K562 (cell line): ENCODE measurements at regions of chr11 and their contacts with region 1.

Region 1: DNA sequence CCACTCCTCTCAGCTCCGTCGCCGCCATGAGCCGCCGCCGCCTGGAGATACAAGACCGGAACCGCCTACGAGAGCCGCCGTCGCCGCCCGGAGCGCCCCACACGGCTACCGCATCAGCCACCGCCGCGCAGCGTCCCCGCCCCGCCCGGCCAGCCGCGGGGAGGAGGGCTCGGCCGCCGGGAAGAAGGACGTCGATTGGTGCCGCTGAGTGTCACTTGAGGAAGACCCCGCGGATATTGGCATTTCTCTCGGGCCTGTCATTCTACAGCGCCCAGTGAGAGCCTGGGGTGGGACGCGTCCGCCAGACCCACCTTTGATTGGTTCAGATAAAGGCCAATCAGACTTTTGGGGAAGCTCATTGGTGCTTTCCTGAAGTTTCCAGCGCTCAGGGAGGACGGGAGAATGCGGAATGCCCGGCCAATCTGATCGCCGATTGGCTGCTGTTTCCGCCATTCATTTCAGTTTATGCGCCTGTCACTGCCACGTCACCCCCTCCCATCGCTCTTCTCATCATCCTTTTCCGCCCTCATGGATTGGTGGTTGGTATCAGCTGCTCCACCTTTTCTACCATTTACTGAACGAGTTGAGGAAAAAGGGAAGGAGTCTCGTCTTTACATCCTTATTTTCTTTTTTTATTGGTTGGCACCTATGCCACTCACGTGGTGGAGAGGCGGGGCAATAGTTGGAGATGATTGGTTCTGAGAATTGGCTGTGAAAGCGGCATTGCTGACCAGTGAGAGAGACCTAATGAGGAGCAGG is at the start of gene OSBP:
- DNase-seq: peak; percentile 98 to 100 (median 98)
- ATAC-seq: peak; percentile 94
- H3K4me3 ChIP-seq: peak within 1 kb of the TSS; percentile 78
- H3K27ac ChIP-seq: peak within 1 kb of the TSS; percentile 93
- H3K4me1 ChIP-seq: peaks cover 8 to 42% of the 10 kb centered on the region in 2 experiments
- H3K27me3 ChIP-seq: no peaks in the 10 kb centered on the region
- CTCF ChIP-seq: 0 out of 6 replicates have a peak, but pooled peaks of 1 of the 3 experiments have one; percentile 2
- EP300 ChIP-seq: no peak
- POLR2A ChIP-seq: peak; percentile 72
- RAD21 ChIP-seq: no peak
- polyA plus RNA-seq, gene OSBP: 11.7 to 11.9 TPM

Region 2: DNA sequence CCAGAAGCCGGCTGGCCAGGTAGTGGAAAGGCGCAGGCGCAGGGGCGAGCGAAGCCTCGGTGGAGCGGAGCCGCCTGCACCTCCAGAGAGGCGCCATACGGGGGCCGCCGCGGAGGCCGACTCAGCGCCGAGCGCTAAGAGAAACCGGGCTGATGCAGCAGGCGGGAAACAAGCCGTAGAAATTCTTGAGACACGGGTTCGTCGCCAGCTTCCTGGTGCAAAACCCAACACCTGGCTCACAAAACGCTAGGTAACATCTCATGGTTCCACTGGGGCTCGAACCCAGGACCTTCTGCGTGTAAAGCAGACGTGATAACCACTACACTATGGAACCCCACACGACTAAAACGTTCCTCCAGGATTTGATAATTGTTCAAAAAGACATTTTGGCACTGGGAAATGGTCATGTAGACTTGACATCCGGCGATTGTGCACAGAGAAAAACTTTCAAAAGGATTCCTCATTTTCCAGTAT is 65.4 kb before region 1 on chr11:
- CTCF ChIA-PET with region 1: no interaction called
- POLR2A ChIA-PET with region 1: interaction called, 12 read pairs
- in situ Hi-C with region 1: no loop called
- intact Hi-C with region 1: loop called (anchors 5 kb)
- DNase-seq: peak; percentile 74 to 97 (median 76)
- ATAC-seq: peak; percentile 82
- H3K4me3 ChIP-seq: peak overlapping the region; percentile 57
- H3K27ac ChIP-seq: peak overlapping the region; percentile 100
- H3K4me1 ChIP-seq: peaks cover 22 to 31% of the 10 kb centered on the region in 2 experiments; a peak in 4 of 5 replicates
- H3K27me3 ChIP-seq: no peaks in the 10 kb centered on the region
- CTCF ChIP-seq: peak; percentile 59 to 70 (median 62)
- EP300 ChIP-seq: peak; percentile 49
- POLR2A ChIP-seq: no peak
- RAD21 ChIP-seq: peak; percentile 26 to 64; a peak in 3 of 4 replicates

Region 3: GRCh38 chr11:59560702-59561469 is 54.9 kb before region 1 on chr11:
- CTCF ChIA-PET with region 1: no interaction called
- POLR2A ChIA-PET with region 1: interaction called, 6 read pairs
- in situ Hi-C with region 1: no loop called
- intact Hi-C with region 1: loop called (anchors 2 kb)
- DNase-seq: peak; percentile 88 to 94 (median 90)
- ATAC-seq: peak; percentile 56
- H3K4me3 ChIP-seq: peak overlapping the region; percentile 60
- H3K27ac ChIP-seq: peak overlapping the region; percentile 87
- H3K4me1 ChIP-seq: peaks cover 17 to 27% of the 10 kb centered on the region in 2 experiments
- H3K27me3 ChIP-seq: no peaks in the 10 kb centered on the region
- CTCF ChIP-seq: no peak
- EP300 ChIP-seq: no peak
- POLR2A ChIP-seq: peak; percentile 57; the same call in 1 of the 2 replicates
- RAD21 ChIP-seq: no peak

Region 4: DNA sequence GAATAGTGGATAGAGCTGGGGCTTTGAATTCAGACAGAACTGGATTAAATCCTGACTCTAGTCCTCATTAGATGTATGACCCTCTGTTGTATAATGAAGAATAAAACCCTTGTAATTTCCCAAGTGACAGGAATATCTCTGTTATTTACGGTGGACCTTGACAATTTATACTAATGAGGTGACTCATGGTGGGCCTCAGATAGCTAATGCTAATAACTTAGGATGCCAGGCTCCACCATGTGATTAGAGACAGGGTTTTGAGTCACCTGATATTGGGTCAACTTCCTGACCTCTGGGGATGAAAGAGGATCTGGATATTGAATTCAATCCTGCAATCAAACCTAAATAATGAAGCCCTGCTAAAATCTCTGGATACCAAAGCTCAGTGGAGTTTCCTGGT is 33.8 kb before region 1 on chr11:
- CTCF ChIA-PET with region 1: no interaction called
- POLR2A ChIA-PET with region 1: no interaction called
- in situ Hi-C with region 1: no loop called
- intact Hi-C with region 1: no loop called
- DNase-seq: no peak
- ATAC-seq: no peak
- H3K4me3 ChIP-seq: no peak overlapping the region
- H3K27ac ChIP-seq: no peak overlapping the region
- H3K4me1 ChIP-seq: no peaks in the 10 kb centered on the region
- H3K27me3 ChIP-seq: no peaks in the 10 kb centered on the region
- CTCF ChIP-seq: no peak
- EP300 ChIP-seq: no peak
- POLR2A ChIP-seq: no peak
- RAD21 ChIP-seq: no peak

Region 5: DNA sequence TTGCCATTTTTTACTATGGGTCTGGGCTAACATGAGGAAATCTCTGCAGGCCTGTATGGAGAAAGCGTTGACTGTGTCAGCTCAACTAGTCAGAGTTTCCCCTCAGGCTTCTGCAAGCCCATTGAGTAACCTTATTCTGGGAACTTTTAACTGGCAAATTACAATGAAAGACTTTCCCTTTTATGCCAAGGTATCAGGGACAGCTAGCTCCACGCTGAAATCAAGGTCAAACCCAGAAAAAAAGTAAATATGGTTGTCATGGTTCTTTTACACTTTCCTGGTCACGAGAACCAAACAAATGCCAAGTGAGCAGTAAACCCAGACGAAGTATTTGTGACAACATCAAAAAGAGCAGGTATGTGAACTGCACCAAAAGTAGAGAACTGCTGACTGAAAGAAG is 14.0 kb before region 1 on chr11:
- CTCF ChIA-PET with region 1: no interaction called
- POLR2A ChIA-PET with region 1: interaction called, 33 read pairs
- in situ Hi-C with region 1: no loop called
- intact Hi-C with region 1: no loop called
- DNase-seq: no peak
- ATAC-seq: no peak
- H3K4me3 ChIP-seq: no peak overlapping the region
- H3K27ac ChIP-seq: no peak overlapping the region
- H3K4me1 ChIP-seq: no peaks in the 10 kb centered on the region
- H3K27me3 ChIP-seq: no peaks in the 10 kb centered on the region
- CTCF ChIP-seq: no peak
- EP300 ChIP-seq: no peak
- POLR2A ChIP-seq: no peak
- RAD21 ChIP-seq: no peak

Region 6: GRCh38 chr11:59668950-59669610 is 53.3 kb after region 1 on chr11 and contains the start of gene PATL1:
- CTCF ChIA-PET with region 1: no interaction called
- POLR2A ChIA-PET with region 1: interaction called, 8 read pairs
- in situ Hi-C with region 1: no loop called
- intact Hi-C with region 1: loop called (anchors 2 kb)
- DNase-seq: peak; percentile 98 to 99 (median 98)
- ATAC-seq: peak; percentile 95
- H3K4me3 ChIP-seq: peak within 1 kb of the TSS; percentile 82
- H3K27ac ChIP-seq: peak within 1 kb of the TSS; percentile 92
- H3K4me1 ChIP-seq: peaks cover 11 to 14% of the 10 kb centered on the region in 2 experiments; a peak in 3 of 5 replicates
- H3K27me3 ChIP-seq: no peaks in the 10 kb centered on the region
- CTCF ChIP-seq: no peak
- EP300 ChIP-seq: no peak
- POLR2A ChIP-seq: peak; percentile 75
- RAD21 ChIP-seq: no peak
- polyA plus RNA-seq, gene PATL1: 3.2 to 5.0 TPM

Region 7: GRCh38 chr11:59729834-59730233 is 114.0 kb after region 1 on chr11:
- CTCF ChIA-PET with region 1: no interaction called
- POLR2A ChIA-PET with region 1: no interaction called
- in situ Hi-C with region 1: no loop called
- intact Hi-C with region 1: no loop called
- DNase-seq: no peak
- ATAC-seq: no peak
- H3K4me3 ChIP-seq: no peak overlapping the region
- H3K27ac ChIP-seq: no peak overlapping the region
- H3K4me1 ChIP-seq: no peaks in the 10 kb centered on the region; a peak in 1 of 5 replicates
- H3K27me3 ChIP-seq: no peaks in the 10 kb centered on the region
- CTCF ChIP-seq: no peak
- EP300 ChIP-seq: no peak
- POLR2A ChIP-seq: no peak
- RAD21 ChIP-seq: no peak

Region 8: DNA sequence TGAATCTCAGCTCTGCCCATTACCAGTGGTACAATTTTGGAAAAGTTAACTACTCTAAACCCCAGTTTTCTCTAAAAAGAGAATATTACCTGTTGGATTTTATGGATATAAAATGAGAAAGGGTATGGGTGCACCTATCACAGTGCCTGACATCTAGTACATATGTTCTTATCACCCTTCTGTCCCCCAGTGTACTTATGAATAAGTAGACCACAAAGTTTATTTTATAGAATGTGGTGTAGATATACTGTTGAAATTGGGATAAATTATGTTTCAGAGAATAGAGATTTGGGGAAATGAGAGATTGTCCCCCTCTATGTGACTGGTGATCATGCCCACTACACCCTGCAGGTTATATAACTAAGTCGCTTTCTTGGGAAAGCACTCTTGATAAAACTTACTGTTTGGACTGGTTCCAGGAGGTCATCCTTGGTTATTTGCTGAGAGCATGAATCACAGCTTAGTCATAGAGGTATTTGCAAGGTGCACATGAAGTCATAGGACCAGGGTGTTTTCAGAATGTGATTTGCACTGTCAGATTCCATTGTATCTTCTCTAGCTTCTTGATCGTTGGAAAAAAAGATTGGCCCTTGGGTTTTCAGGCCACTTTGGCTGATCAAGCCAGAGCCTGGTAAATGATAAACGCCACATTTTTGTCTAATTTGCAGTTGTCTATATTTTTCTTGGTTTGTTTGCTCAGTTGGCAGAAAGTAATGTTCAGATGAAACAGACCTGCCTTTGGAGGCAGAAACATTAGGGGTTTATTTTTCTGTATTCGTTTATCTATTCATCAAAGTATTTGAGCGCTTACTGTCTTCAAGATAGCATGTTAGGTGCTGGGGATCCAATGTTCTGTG is 160.6 kb after region 1 on chr11:
- CTCF ChIA-PET with region 1: no interaction called
- POLR2A ChIA-PET with region 1: no interaction called
- in situ Hi-C with region 1: no loop called
- intact Hi-C with region 1: no loop called
- DNase-seq: peak in 2 of 4 experiments; percentile 30 to 60
- ATAC-seq: no peak
- H3K4me3 ChIP-seq: no peak overlapping the region
- H3K27ac ChIP-seq: no peak overlapping the region
- H3K4me1 ChIP-seq: peaks cover 5 to 12% of the 10 kb centered on the region in 2 experiments
- H3K27me3 ChIP-seq: no peaks in the 10 kb centered on the region
- CTCF ChIP-seq: no peak
- EP300 ChIP-seq: no peak
- POLR2A ChIP-seq: no peak
- RAD21 ChIP-seq: no peak